ENCODE measurements at regions of chr1 and their contacts with region 1.

Region 1: GRCh38 chr1:28259307-28260167 is at the start of gene SESN2:
- DNase-seq: peak; percentile 85 to 94
- ATAC-seq: peak; percentile 94 to 95
- H3K4me3 ChIP-seq: peak within 1 kb of the TSS; percentile 100
- H3K27ac ChIP-seq: peak within 1 kb of the TSS; percentile 99
- H3K4me1 ChIP-seq: peaks cover 45% of the 10 kb centered on the region
- CTCF ChIP-seq: no peak
- EP300 ChIP-seq: peak in 1 of 2 experiments; percentile 41; a peak in 1 of 5 replicates
- POLR2A ChIP-seq: peak; percentile 68
- RAD21 ChIP-seq: no peak
- polyA plus RNA-seq, gene SESN2: 16.6 and 16.7 TPM in 2 replicates

Region 2: DNA sequence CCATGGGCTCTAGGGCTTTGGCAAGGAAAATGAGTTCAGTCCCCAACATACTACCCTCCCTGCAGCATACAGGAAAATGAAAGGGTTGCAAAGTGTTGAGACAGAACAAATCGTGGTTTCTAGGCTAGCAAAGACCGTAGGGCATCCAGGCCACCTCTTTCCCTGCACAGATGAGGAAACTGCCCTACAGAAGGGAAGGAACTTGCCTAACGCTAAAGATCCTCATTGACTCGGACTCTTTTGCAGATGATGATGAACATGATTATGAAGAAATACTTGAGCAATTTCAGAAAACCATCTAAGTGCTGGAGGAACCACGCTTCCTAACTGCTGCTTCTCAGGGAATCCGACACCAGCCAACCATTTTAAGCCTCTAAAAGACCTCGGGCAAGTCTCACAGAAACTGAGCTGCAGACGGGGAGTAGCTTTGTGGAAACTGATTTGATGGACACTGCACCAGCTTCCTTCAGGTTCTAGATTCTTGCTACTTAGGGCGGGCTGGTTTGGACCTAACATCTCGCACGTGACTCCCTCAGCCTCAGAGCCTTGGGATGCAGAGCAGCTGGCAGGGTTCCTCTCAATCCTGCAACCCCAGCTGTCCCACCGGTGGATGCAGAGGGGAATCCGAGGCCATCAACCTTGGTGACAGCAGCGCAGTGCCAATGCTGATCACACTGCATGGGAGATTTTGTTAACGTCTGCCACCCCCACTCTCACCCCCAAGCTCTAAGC is 373.8 kb before region 1 on chr1:
- CTCF ChIA-PET with region 1: no interaction called
- POLR2A ChIA-PET with region 1: interaction called, 10 read pairs
- DNase-seq: no peak
- ATAC-seq: no peak
- H3K4me3 ChIP-seq: no peak overlapping the region
- H3K27ac ChIP-seq: no peak overlapping the region
- H3K4me1 ChIP-seq: no peaks in the 10 kb centered on the region
- CTCF ChIP-seq: no peak
- EP300 ChIP-seq: no peak
- POLR2A ChIP-seq: no peak
- RAD21 ChIP-seq: no peak

Measured in A549 (cell line).